ENCODE measurements at regions of chr10 and their contacts with region 1.

Region 1: GRCh38 chr10:29669149-29669548 is 34.4 kb upstream of the SVIL start:
- DNase-seq: no peak
- H3K4me3 ChIP-seq: no peak overlapping the region
- H3K27ac ChIP-seq: peak overlapping the region in 2 of 4 donors; percentile 40 to 49
- H3K4me1 ChIP-seq: peaks cover 0 to 77% (median 63%) of the 10 kb centered on the region in 4 donors
- H3K27me3 ChIP-seq: no peaks in the 10 kb centered on the region
- CTCF ChIP-seq: no peak
- EP300 ChIP-seq: no peak
- POLR2A ChIP-seq: no peak

Region 2: DNA sequence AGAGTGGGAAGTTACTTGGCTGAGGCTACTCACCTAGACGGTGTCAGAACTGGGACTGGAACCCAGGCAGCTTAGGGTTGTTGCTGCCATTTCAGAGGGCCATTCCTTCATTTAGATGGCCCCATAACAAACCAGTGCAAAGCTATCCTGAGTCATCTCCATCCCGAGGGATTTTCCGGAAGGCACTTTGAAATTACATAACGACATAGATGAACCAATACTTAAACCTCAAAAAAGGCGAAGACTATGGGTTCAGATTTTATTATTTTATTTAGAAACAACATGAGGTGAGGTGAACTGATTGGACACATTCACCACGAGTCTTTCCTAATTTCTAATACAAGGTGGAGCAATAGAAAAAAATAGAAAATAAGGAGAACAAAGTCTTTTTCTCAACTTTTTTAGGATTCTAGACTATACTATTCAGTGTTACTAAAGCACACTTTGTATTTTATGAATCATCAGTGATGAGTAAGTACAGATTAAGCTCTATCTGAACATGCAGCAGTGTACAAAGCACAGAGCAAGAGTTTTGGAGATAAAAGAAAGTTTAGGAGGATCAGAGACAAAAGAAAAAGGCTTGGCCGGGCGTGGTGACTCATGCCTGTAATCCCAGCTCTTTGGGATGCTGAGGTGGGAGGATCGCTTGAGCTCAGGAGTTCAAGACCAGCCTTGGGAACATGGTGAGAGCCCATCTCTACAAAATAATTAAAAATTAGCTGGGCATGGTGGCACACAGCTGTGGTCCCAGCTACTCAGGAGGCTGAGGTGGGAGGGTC is 45.1 kb after region 1 on chr10:
- intact Hi-C with region 1: loop called (anchors 10 kb)
- DNase-seq: no peak
- H3K4me3 ChIP-seq: no peak overlapping the region
- H3K27ac ChIP-seq: peak overlapping the region in 3 of 4 donors; percentile 6 to 40 (median 39)
- H3K4me1 ChIP-seq: peaks cover 6 to 90% (median 81%) of the 10 kb centered on the region in 4 donors
- H3K27me3 ChIP-seq: no peaks in the 10 kb centered on the region
- CTCF ChIP-seq: no peak
- EP300 ChIP-seq: no peak
- POLR2A ChIP-seq: no peak